Caco-2 (cell line): ENCODE measurements at regions of chr4 and their contacts with region 1.

Region 1: GRCh38 chr4:15805583-15806517 is 27.7 kb downstream of the CD38 start:
- DNase-seq: peak in 1 of 2 experiments; percentile 52
- H3K4me3 ChIP-seq: no peak overlapping the region
- H3K4me3 Mint-ChIP-seq: no peak overlapping the region
- H3K27ac Mint-ChIP-seq: no peak overlapping the region
- H3K4me1 ChIP-seq: no peaks in the 10 kb centered on the region
- H3K4me1 Mint-ChIP-seq: peaks cover 9% of the 10 kb centered on the region
- H3K27me3 ChIP-seq: no peaks in the 10 kb centered on the region
- H3K27me3 Mint-ChIP-seq: peaks cover 5% of the 10 kb centered on the region
- CTCF ChIP-seq: peak; percentile 65 to 72

Region 2: DNA sequence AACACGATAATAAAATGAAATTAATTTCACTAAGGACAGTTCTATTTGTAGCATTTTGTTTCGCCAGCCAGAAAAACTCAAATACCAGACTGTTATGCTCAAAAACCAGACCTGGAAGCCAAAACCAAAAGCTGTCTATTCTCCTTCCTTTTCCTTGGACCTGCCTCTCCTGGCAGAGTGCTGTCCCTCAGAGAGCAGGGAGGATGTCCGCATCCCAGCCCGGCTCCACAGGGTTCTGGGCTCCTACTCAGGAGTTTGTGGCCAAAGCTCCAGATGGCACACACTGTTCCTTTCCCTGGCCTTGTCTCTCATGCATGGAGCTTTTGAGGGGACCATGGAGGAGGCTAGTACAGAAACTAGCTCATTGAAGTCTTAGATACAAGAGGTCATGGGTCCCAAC is 419.9 kb before region 1 on chr4:
- CTCF ChIA-PET with region 1: no interaction called
- POLR2A ChIA-PET with region 1: no interaction called
- intact Hi-C with region 1: no loop called
- DNase-seq: no peak
- H3K4me3 ChIP-seq: no peak overlapping the region
- H3K4me3 Mint-ChIP-seq: no peak overlapping the region
- H3K27ac Mint-ChIP-seq: no peak overlapping the region
- H3K4me1 ChIP-seq: no peaks in the 10 kb centered on the region
- H3K4me1 Mint-ChIP-seq: no peaks in the 10 kb centered on the region
- H3K27me3 ChIP-seq: no peaks in the 10 kb centered on the region
- H3K27me3 Mint-ChIP-seq: peaks cover 7% of the 10 kb centered on the region
- CTCF ChIP-seq: no peak

Region 3: DNA sequence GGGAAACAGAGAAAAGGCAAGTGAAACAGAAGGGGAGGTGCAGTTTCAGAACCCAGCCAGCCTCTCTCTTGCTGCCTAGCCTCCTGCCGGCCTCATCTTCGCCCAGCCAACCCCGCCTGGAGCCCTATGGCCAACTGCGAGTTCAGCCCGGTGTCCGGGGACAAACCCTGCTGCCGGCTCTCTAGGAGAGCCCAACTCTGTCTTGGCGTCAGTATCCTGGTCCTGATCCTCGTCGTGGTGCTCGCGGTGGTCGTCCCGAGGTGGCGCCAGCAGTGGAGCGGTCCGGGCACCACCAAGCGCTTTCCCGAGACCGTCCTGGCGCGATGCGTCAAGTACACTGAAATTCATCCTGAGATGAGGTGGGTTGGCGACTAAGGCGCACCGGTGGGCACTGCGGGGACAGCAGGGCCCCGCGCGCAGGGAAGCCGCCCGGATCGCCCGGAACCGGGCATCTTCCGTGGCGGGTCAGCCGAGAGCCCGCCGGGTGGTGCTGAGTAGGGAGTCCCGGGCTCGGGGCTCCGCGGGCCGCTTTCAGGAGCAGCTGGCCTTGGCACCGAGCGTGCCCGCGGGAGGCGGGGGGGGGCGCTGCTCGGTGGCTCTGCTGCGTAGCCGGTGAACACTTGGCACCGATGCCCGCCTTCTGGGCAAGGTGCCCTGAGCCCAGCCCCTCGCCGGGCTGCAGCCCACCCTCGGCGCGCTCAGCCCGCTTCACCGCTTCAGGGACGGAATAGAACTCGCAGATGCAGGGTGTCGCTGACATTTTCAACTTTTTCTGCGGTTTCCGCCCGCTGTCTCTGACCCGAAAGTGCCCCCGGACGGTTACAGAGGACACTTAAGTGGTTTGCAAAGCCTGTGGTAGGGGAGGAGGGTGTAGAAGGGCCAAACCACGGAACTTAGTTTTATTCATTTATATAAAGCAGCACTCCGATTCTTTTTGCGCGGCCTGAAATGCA is 27.3 kb before region 1 on chr4 and contains the start of gene CD38:
- CTCF ChIA-PET with region 1: no interaction called
- POLR2A ChIA-PET with region 1: no interaction called
- intact Hi-C with region 1: no loop called
- DNase-seq: no peak
- H3K4me3 ChIP-seq: peak within 1 kb of the TSS; percentile 17
- H3K4me3 Mint-ChIP-seq: peak within 1 kb of the TSS; percentile 57
- H3K27ac Mint-ChIP-seq: no peak within 1 kb of the TSS
- H3K4me1 ChIP-seq: no peaks in the 10 kb centered on the region
- H3K4me1 Mint-ChIP-seq: peaks cover 6% of the 10 kb centered on the region
- H3K27me3 ChIP-seq: no peaks in the 10 kb centered on the region
- H3K27me3 Mint-ChIP-seq: peaks cover 38% of the 10 kb centered on the region
- CTCF ChIP-seq: no peak
- total RNA-seq, gene CD38: not detected in 2 replicates

Region 4: GRCh38 chr4:15868111-15868510 is 62.3 kb after region 1 on chr4:
- CTCF ChIA-PET with region 1: no interaction called
- POLR2A ChIA-PET with region 1: no interaction called
- intact Hi-C with region 1: loop called (anchors 5 kb)
- DNase-seq: no peak
- H3K4me3 ChIP-seq: no peak overlapping the region
- H3K4me3 Mint-ChIP-seq: no peak overlapping the region
- H3K27ac Mint-ChIP-seq: no peak overlapping the region
- H3K4me1 ChIP-seq: peaks cover 5% of the 10 kb centered on the region; the same call in 1 of the 2 replicates
- H3K4me1 Mint-ChIP-seq: no peaks in the 10 kb centered on the region
- H3K27me3 ChIP-seq: no peaks in the 10 kb centered on the region
- H3K27me3 Mint-ChIP-seq: peaks cover 9% of the 10 kb centered on the region
- CTCF ChIP-seq: no peak

Region 5: GRCh38 chr4:15882675-15883086 is 76.8 kb after region 1 on chr4:
- CTCF ChIA-PET with region 1: interaction called, 34 read pairs
- POLR2A ChIA-PET with region 1: interaction called, 3 read pairs
- intact Hi-C with region 1: loop called (anchors 1 kb)
- DNase-seq: peak; percentile 53 to 71
- H3K4me3 ChIP-seq: no peak overlapping the region
- H3K4me3 Mint-ChIP-seq: no peak overlapping the region
- H3K27ac Mint-ChIP-seq: no peak overlapping the region
- H3K4me1 ChIP-seq: no peaks in the 10 kb centered on the region
- H3K4me1 Mint-ChIP-seq: no peaks in the 10 kb centered on the region
- H3K27me3 ChIP-seq: no peaks in the 10 kb centered on the region
- H3K27me3 Mint-ChIP-seq: peaks cover 2% of the 10 kb centered on the region
- CTCF ChIP-seq: peak; percentile 85 to 88

Region 6: GRCh38 chr4:15893962-15894361 is 88.1 kb after region 1 on chr4:
- CTCF ChIA-PET with region 1: no interaction called
- POLR2A ChIA-PET with region 1: no interaction called
- intact Hi-C with region 1: no loop called
- DNase-seq: peak in 1 of 2 experiments; percentile 37
- H3K4me3 ChIP-seq: no peak overlapping the region
- H3K4me3 Mint-ChIP-seq: no peak overlapping the region
- H3K27ac Mint-ChIP-seq: peak overlapping the region; percentile 63
- H3K4me1 ChIP-seq: peaks cover 4% of the 10 kb centered on the region; the same call in 1 of the 2 replicates
- H3K4me1 Mint-ChIP-seq: peaks cover 9% of the 10 kb centered on the region
- H3K27me3 ChIP-seq: no peaks in the 10 kb centered on the region
- H3K27me3 Mint-ChIP-seq: peaks cover 3% of the 10 kb centered on the region
- CTCF ChIP-seq: no peak

Region 7: GRCh38 chr4:15956179-15956850 is 150.5 kb after region 1 on chr4:
- CTCF ChIA-PET with region 1: interaction called, 52 read pairs
- POLR2A ChIA-PET with region 1: no interaction called
- intact Hi-C with region 1: loop called (anchors 1 kb)
- DNase-seq: peak; percentile 80 to 81
- H3K4me3 ChIP-seq: no peak overlapping the region
- H3K4me3 Mint-ChIP-seq: no peak overlapping the region
- H3K27ac Mint-ChIP-seq: no peak overlapping the region
- H3K4me1 ChIP-seq: peaks cover 8% of the 10 kb centered on the region; the same call in 1 of the 2 replicates
- H3K4me1 Mint-ChIP-seq: peaks cover 5% of the 10 kb centered on the region
- H3K27me3 ChIP-seq: no peaks in the 10 kb centered on the region
- H3K27me3 Mint-ChIP-seq: no peaks in the 10 kb centered on the region
- CTCF ChIP-seq: peak; percentile 85 to 86